Caco-2 (cell line): ENCODE measurements at regions of chr9 and their contacts with region 1.

Region 1: DNA sequence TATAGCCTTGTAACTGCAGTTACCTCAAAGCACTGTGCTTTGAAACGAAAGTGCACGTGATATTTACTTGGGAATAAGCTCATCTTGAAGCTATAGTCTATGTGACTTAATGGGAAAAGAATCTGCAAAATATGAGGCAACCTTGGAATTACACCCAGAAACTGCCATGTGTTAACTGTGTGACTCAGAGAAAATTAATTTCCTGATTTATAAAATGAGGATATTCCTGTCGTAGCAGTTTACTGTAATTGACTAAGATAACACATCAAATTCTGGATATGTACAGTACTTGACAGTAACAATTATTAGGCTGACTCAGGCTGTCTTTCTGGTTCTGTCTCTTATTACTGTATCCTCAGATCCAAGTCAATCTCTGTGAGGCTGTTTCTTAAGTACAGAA is 1079.9 kb upstream of the ACO1 start:
- DNase-seq: no peak
- H3K4me3 ChIP-seq: no peak overlapping the region
- H3K4me3 Mint-ChIP-seq: no peak overlapping the region
- H3K27ac Mint-ChIP-seq: no peak overlapping the region
- H3K4me1 ChIP-seq: no peaks in the 10 kb centered on the region
- H3K4me1 Mint-ChIP-seq: no peaks in the 10 kb centered on the region
- H3K27me3 ChIP-seq: no peaks in the 10 kb centered on the region
- H3K27me3 Mint-ChIP-seq: no peaks in the 10 kb centered on the region
- CTCF ChIP-seq: no peak

Region 2: GRCh38 chr9:30250872-30251271 is 1053.7 kb before region 1 on chr9:
- CTCF ChIA-PET with region 1: no interaction called
- POLR2A ChIA-PET with region 1: no interaction called
- intact Hi-C with region 1: no loop called
- DNase-seq: no peak
- H3K4me3 ChIP-seq: no peak overlapping the region
- H3K4me3 Mint-ChIP-seq: no peak overlapping the region
- H3K27ac Mint-ChIP-seq: no peak overlapping the region
- H3K4me1 ChIP-seq: no peaks in the 10 kb centered on the region
- H3K4me1 Mint-ChIP-seq: no peaks in the 10 kb centered on the region
- H3K27me3 ChIP-seq: no peaks in the 10 kb centered on the region
- H3K27me3 Mint-ChIP-seq: no peaks in the 10 kb centered on the region
- CTCF ChIP-seq: no peak

Region 3: GRCh38 chr9:31243386-31243785 is 61.2 kb before region 1 on chr9:
- CTCF ChIA-PET with region 1: no interaction called
- POLR2A ChIA-PET with region 1: no interaction called
- intact Hi-C with region 1: no loop called
- DNase-seq: no peak
- H3K4me3 ChIP-seq: no peak overlapping the region
- H3K4me3 Mint-ChIP-seq: no peak overlapping the region
- H3K27ac Mint-ChIP-seq: no peak overlapping the region
- H3K4me1 ChIP-seq: peaks cover 5% of the 10 kb centered on the region; the same call in 1 of the 2 replicates
- H3K4me1 Mint-ChIP-seq: peaks cover 7% of the 10 kb centered on the region
- H3K27me3 ChIP-seq: no peaks in the 10 kb centered on the region
- H3K27me3 Mint-ChIP-seq: no peaks in the 10 kb centered on the region
- CTCF ChIP-seq: no peak

Region 4: GRCh38 chr9:31799953-31800609 is 495.5 kb after region 1 on chr9:
- CTCF ChIA-PET with region 1: no interaction called
- POLR2A ChIA-PET with region 1: no interaction called
- intact Hi-C with region 1: loop called (anchors 1 kb)
- DNase-seq: peak in 1 of 2 experiments; percentile 26
- H3K4me3 ChIP-seq: no peak overlapping the region
- H3K4me3 Mint-ChIP-seq: no peak overlapping the region
- H3K27ac Mint-ChIP-seq: no peak overlapping the region
- H3K4me1 ChIP-seq: no peaks in the 10 kb centered on the region
- H3K4me1 Mint-ChIP-seq: no peaks in the 10 kb centered on the region
- H3K27me3 ChIP-seq: no peaks in the 10 kb centered on the region
- H3K27me3 Mint-ChIP-seq: no peaks in the 10 kb centered on the region
- CTCF ChIP-seq: peak; percentile 32 to 45